ENCODE measurements at regions of chr12 and their contacts with region 1.

Region 1: DNA sequence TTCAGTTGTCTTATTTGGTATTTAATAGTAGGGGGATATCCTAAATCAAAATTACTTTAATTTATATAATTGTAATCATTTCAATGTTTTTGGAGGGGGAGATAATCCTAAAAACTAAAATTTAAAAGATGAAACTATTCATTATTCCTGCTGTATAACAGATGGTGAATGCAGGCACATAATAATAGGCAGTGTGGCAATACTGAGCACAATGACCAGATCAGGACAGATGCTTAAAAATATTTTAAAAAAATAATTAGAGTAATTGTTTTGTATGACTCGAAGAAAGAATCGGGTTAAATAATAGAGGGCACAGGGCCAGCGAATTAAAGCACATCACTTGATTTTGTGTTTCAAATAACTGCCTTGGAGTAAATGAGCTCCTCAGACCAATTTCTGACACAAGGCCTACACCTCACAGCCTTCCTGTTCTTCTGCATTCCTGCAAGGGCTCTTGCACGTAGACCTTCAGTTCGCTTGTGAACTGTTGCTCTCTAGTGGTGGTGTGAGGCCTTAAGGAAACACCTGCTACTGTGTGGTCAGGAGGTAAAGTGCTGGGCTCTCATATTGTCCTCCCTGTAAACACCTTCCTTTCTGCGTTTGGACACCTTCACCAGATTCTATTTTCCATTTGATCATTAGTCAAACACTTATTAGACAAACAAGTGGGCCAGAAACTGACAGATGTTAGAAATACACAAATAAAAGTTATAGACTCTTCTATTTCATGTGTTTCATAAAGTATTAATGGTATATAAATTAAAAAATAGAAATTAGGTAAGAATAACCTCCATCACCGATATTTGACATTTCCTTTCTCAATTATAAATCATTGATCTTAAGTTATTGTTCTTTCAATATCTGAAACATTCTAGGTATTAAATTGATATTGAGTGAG is 29.3 kb upstream of the KLRF1 start:
- DNase-seq: peak; percentile 82
- H3K4me3 Mint-ChIP-seq: no peak overlapping the region
- H3K27ac Mint-ChIP-seq: no peak overlapping the region
- H3K4me1 Mint-ChIP-seq: peaks cover 21% of the 10 kb centered on the region
- H3K27me3 Mint-ChIP-seq: no peaks in the 10 kb centered on the region
- CTCF ChIP-seq: peak; percentile 82

Region 2: DNA sequence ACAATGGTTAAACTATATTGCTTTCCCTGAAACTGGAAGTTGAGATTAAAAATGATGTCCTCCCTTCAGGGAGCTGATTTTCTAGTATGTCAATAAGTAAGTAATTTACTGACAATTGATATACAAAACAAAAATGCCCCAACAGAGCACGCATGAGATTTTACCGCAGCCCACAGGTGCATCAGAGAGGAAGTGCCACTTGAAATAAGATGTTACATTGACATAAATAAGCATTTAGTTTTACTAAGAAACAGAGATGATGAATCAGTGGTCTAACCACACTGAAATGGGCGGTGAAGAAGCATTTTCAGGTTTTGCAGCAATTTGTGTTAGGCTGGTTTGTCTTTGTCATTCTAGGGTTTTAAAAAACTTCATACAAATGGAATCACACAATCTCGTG is 56.2 kb before region 1 on chr12:
- CTCF ChIA-PET with region 1: interaction called, 17 read pairs
- intact Hi-C with region 1: no loop called
- DNase-seq: no peak
- H3K4me3 Mint-ChIP-seq: no peak overlapping the region
- H3K27ac Mint-ChIP-seq: no peak overlapping the region
- H3K4me1 Mint-ChIP-seq: peaks cover 41% of the 10 kb centered on the region
- H3K27me3 Mint-ChIP-seq: no peaks in the 10 kb centered on the region
- CTCF ChIP-seq: no peak

Region 3: GRCh38 chr12:9750276-9751203 is 47.4 kb before region 1 on chr12:
- CTCF ChIA-PET with region 1: interaction called, 102 read pairs
- intact Hi-C with region 1: loop called (anchors 1 kb)
- DNase-seq: peak; percentile 55
- H3K4me3 Mint-ChIP-seq: no peak overlapping the region
- H3K27ac Mint-ChIP-seq: no peak overlapping the region
- H3K4me1 Mint-ChIP-seq: no peaks in the 10 kb centered on the region
- H3K27me3 Mint-ChIP-seq: no peaks in the 10 kb centered on the region
- CTCF ChIP-seq: peak; percentile 73

Region 4: GRCh38 chr12:9756706-9757105 is 41.3 kb before region 1 on chr12:
- CTCF ChIA-PET with region 1: interaction called, 102 read pairs
- intact Hi-C with region 1: no loop called
- DNase-seq: no peak
- H3K4me3 Mint-ChIP-seq: no peak overlapping the region
- H3K27ac Mint-ChIP-seq: no peak overlapping the region
- H3K4me1 Mint-ChIP-seq: peaks cover 37% of the 10 kb centered on the region
- H3K27me3 Mint-ChIP-seq: no peaks in the 10 kb centered on the region
- CTCF ChIP-seq: no peak